Activated T-helper 2 cell treated with anti-CD3 and anti-CD28 coated beads, Interferon-gamma antibody, Interleukin-2, Interleukin-4, amounts not matched to agents 10 μg/mL and 5 μg/mL and 100 μg/mL, durations not matched to agents 14 hours and 24 hours and 36 hours (primary cell): ENCODE measurements at regions of chr15 and their contacts with region 1.

Region 1: DNA sequence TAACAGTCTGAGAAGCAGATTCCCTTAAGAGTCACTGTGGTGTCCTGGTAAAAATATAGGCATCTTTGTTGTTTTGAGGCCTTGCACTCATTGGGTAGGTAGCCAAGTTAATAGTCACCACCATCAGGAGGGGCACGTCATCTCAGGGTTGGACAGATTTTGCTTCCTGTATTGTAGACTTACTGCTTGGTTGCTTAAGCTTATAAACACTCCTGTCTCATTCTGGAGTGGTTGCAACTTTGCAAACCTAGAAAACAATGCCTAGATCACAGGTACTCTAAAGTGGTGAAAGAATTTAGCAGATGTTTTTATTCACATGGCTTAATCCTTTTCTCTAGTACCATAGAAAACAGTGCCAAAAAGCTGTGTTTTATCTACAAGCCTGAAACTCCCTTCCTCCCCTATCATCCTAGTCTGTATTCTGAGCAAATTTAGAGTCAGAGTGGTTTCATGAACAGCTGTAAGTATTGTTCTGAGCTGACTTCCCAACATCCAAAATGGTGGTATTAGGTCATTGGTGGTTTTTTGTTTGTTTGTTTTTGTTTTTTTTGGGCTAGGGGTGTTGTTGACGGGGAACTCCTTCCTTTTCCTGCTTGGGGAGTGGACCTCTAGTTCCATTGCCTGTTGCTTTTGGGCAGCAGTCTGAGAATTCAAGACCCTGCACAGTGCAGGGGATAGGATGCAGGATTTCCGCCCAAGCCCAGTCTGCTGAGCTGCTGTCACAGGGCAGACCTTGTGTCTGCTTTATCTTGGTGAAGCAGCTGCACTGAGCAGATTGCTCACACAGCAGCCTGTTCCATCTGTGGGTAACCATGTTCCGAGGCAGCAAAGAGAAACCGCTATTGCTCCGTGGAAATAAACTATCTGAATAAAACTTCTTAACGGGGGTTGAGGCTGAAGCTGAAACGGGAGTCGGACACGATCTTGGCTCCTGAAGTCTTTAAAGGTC is 202.0 kb downstream of the AKAP13 start:
- DNase-seq: peak; percentile 68
- H3K4me3 Mint-ChIP-seq: peak overlapping the region; percentile 83
- H3K27ac Mint-ChIP-seq: peak overlapping the region; percentile 98
- H3K4me1 Mint-ChIP-seq: peaks cover 73% of the 10 kb centered on the region
- H3K27me3 Mint-ChIP-seq: no peaks in the 10 kb centered on the region

Region 2: GRCh38 chr15:85330901-85331588 is 251.4 kb before region 1 on chr15:
- intact Hi-C with region 1: loop called (anchors 5 kb)
- DNase-seq: peak; percentile 68
- H3K4me3 Mint-ChIP-seq: peak overlapping the region; percentile 91
- H3K27ac Mint-ChIP-seq: peak overlapping the region; percentile 96
- H3K4me1 Mint-ChIP-seq: peaks cover 48% of the 10 kb centered on the region
- H3K27me3 Mint-ChIP-seq: no peaks in the 10 kb centered on the region

Region 3: DNA sequence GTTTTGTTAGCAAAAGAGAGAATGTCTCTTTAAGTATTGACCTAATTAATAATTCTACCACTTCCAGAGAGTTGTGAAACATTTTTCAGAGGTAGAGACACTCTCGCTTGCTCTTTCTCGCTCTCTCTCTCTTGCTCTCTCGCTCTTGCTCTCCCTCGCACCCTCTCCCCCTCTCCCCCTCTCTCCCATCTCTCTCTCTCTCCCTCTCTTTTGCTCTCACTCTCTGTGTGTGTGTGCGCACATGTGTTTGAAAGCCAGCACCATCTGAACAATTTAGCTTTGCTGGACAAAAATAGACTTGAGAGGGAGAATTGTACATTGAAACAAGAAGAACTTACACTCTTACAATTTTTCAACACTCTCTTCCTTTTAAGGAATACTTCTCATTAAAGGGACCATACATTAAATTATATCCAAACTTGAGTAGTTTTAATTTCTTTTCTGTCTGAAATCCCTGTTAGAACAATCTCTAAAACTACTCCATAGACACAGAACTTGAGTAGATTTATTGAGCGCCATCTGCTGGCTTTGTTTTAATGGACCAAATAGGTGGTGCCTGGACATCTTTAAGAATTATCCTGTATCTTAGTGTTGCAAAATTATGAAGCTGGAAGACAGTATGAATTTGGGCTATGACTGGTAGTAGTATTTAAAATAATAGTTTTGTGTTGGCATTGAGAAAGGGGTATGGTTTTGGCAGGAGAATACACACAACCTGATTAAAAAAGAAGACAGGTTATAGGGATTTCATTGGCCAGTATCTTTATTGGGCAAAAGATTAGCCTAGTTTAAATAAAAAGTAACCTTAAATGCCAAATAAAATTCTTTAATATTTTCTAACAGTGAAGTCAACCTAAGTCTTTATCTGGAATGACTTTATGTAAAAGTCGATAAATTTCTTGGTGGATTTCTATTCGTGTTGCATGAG is 77.4 kb before region 1 on chr15:
- intact Hi-C with region 1: loop called (anchors 2 kb)
- DNase-seq: no peak
- H3K4me3 Mint-ChIP-seq: no peak overlapping the region
- H3K27ac Mint-ChIP-seq: peak overlapping the region; percentile 54
- H3K4me1 Mint-ChIP-seq: peaks cover 54% of the 10 kb centered on the region
- H3K27me3 Mint-ChIP-seq: no peaks in the 10 kb centered on the region

Region 4: GRCh38 chr15:85558848-85559247 is 23.6 kb before region 1 on chr15:
- intact Hi-C with region 1: loop called (anchors 2 kb)
- DNase-seq: no peak
- H3K4me3 Mint-ChIP-seq: no peak overlapping the region
- H3K27ac Mint-ChIP-seq: peak overlapping the region; percentile 69
- H3K4me1 Mint-ChIP-seq: peaks cover 42% of the 10 kb centered on the region
- H3K27me3 Mint-ChIP-seq: no peaks in the 10 kb centered on the region

Region 5: DNA sequence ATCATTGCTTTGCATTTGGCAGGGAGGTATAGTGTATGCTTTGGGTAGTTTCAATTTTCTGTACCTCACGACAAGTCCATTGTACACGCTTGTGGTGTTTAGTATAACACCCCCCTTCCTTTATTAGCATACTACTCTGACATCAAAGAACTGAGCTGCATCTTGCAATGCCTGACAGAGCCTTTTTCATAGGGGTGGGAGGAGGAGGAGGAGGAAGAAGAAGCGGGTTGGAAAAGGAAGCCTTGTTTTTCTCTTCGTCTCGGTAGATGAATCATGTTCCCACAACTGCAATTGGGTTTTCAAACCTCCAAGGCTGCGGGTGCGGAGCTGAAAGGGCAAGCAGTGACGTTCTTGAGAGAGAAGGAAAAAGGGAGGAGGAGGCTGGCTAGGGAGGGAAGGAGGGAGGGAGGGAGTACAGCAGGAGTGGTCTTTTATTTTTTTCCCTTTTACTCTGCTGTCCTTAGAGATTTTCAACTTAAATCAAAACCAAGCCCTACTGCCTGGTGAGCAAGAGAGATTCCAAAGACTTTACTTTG is 36.6 kb after region 1 on chr15:
- intact Hi-C with region 1: loop called (anchors 2 kb)
- DNase-seq: peak; percentile 33
- H3K4me3 Mint-ChIP-seq: no peak overlapping the region
- H3K27ac Mint-ChIP-seq: no peak overlapping the region
- H3K4me1 Mint-ChIP-seq: peaks cover 31% of the 10 kb centered on the region
- H3K27me3 Mint-ChIP-seq: no peaks in the 10 kb centered on the region

Region 6: DNA sequence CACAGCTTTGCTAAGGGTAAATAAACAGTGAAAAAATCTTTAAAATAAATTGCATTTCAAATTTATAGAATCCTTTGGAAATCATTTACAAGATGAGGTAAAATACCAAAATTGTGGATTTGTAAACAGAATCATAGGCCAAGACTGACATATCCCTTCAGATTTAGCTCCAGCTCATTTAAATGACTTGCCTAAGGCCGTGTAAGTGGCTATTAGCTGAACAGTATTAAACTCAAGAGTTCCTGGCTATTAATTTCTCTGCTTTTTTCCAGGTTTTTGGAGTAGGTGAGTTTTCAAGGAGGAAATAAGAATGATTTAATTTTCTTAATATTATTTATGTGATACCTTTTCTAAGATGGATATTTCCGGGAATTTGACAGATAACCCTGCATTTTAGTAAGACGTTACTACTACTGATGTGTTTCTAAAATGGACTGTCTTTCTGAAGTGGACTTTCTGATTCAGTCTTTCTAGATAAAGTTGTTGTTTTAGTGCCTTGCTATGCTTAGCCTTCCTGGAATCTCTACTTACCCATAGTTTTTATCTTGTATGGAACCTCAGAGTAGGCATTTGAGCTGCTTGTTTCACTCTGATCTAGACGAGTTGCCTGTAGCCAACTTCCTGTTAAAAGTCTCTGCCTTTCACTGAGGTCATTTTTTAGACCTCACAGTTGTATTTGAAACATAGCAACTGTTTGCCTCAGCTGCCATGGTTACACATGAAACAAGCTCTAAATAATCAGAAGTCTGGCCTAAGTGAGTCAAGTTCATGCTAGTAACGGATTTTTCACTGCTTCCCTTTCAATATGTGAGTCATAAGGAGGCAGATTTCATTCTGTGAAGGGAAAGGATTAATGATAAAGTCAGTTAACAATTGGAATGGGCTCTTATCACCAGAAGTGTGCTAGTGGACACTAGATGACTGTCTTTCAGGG is 85.4 kb after region 1 on chr15:
- intact Hi-C with region 1: loop called (anchors 1 kb)
- DNase-seq: peak; percentile 57
- H3K4me3 Mint-ChIP-seq: no peak overlapping the region
- H3K27ac Mint-ChIP-seq: peak overlapping the region; percentile 91
- H3K4me1 Mint-ChIP-seq: peaks cover 19% of the 10 kb centered on the region
- H3K27me3 Mint-ChIP-seq: no peaks in the 10 kb centered on the region